Heart left ventricle (tissue), 16 donors: ENCODE measurements at regions of chr20 and their contacts with region 1.

Region 1: DNA sequence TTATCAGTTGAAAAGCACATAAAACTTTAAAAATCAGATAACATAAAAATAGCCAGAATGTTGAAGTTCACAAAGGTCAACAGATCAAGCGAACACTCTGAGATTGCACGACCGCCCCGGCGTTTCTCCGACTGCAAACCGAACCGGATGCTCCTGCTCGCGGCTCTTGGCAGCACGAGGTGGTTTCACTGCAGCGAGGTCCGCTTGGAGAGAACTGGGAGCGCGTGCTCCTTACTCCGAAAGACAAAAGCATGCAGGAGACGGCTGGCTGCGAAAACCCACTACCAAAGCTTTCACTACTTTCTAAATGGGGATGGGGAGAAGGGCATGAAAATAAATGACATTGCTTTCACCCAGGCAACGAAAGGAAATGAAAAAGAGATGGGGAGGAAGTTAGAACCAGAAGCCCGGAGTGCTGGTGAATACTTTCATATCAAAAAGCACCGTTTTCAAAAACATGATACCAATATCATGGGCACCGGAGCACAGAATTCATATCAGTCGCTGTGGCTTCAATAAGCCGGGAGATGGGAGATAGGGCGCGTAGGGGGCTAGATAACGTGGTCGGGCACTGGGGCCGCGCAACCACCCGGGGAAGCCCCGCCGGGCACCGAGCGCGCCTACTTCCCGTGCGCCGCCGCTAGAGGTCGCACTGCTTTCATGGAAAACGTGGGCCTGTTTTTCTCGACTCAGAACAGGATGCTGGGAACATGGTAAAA is 8.3 kb upstream of the ANKRD60 start:
- DNase-seq: peak; percentile 53 to 83 (median 71)
- ATAC-seq: peak; percentile 82 to 93 (median 92)
- H3K4me3 ChIP-seq: peak overlapping the region in 11 of 12 donors; percentile 16 to 59 (median 50)
- H3K27ac ChIP-seq: peak overlapping the region in 1 of 12 donors; percentile 18
- H3K4me1 ChIP-seq: peaks cover 0 to 11% (median 0%) of the 10 kb centered on the region in 12 donors
- H3K27me3 ChIP-seq: no peaks in the 10 kb centered on the region
- CTCF ChIP-seq: peak; percentile 94 to 98 (median 96)
- POLR2A ChIP-seq: no peak

Region 2: DNA sequence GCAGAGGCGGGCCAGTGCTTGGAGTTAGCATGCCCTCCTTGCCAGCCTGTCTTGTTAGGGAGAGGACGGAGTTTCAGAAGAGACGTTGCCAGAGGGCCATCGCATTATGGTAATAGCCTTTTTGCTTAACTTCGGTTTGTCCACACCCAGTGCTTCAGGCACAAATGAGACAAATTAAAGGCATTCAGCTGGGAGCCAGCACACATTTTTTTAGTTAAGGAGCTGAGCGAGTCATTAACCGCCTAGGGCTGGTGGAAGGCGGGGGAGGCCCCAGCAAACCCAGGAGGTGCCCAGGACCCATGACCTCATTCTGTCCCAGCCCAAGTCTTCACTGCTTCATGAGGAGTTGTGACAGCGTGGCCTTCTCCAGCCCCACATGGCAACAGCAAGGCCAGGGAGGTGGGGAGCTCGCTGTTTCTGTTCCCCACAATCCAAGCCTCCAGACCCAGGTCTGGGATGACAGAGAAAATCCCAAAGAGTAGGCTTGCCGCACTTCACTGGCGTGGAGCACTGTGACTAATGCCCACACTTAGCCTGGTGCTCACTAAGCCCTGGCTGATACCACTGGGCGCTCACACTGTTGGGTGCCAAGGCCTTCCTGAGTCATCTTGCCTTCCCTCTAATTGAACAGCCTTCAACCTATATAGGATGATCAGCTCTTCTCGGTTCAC is 245.4 kb before region 1 on chr20:
- intact Hi-C with region 1: no loop called
- DNase-seq: peak in 1 of 5 donors; percentile 46
- ATAC-seq: peak in 2 of 4 donors; percentile 52 to 61
- H3K4me3 ChIP-seq: no peak overlapping the region
- H3K27ac ChIP-seq: peak overlapping the region in 1 of 12 donors; percentile 26
- H3K4me1 ChIP-seq: peaks cover 0 to 26% (median 6%) of the 10 kb centered on the region in 12 donors
- H3K27me3 ChIP-seq: no peaks in the 10 kb centered on the region
- CTCF ChIP-seq: no peak
- POLR2A ChIP-seq: no peak

Region 3: GRCh38 chr20:58150772-58151171 is 86.0 kb before region 1 on chr20:
- intact Hi-C with region 1: no loop called
- DNase-seq: no peak
- ATAC-seq: no peak
- H3K4me3 ChIP-seq: no peak overlapping the region
- H3K27ac ChIP-seq: no peak overlapping the region
- H3K4me1 ChIP-seq: peaks cover 0 to 5% (median 0%) of the 10 kb centered on the region in 12 donors
- H3K27me3 ChIP-seq: peaks cover 4 to 61% (median 27%) of the 10 kb centered on the region in 9 donors
- CTCF ChIP-seq: no peak
- POLR2A ChIP-seq: no peak

Region 4: GRCh38 chr20:58179432-58180099 is 57.2 kb before region 1 on chr20:
- intact Hi-C with region 1: no loop called
- DNase-seq: peak; percentile 39 to 82 (median 60)
- ATAC-seq: peak; percentile 12 to 82 (median 70)
- H3K4me3 ChIP-seq: peak overlapping the region in 9 of 12 donors; percentile 13 to 49 (median 27)
- H3K27ac ChIP-seq: peak overlapping the region in 1 of 12 donors; percentile 7
- H3K4me1 ChIP-seq: peaks cover 0 to 22% (median 11%) of the 10 kb centered on the region in 12 donors
- H3K27me3 ChIP-seq: peaks cover 0 to 16% (median 2%) of the 10 kb centered on the region in 9 donors
- CTCF ChIP-seq: peak; percentile 97 to 100 (median 99)
- POLR2A ChIP-seq: no peak

Region 5: DNA sequence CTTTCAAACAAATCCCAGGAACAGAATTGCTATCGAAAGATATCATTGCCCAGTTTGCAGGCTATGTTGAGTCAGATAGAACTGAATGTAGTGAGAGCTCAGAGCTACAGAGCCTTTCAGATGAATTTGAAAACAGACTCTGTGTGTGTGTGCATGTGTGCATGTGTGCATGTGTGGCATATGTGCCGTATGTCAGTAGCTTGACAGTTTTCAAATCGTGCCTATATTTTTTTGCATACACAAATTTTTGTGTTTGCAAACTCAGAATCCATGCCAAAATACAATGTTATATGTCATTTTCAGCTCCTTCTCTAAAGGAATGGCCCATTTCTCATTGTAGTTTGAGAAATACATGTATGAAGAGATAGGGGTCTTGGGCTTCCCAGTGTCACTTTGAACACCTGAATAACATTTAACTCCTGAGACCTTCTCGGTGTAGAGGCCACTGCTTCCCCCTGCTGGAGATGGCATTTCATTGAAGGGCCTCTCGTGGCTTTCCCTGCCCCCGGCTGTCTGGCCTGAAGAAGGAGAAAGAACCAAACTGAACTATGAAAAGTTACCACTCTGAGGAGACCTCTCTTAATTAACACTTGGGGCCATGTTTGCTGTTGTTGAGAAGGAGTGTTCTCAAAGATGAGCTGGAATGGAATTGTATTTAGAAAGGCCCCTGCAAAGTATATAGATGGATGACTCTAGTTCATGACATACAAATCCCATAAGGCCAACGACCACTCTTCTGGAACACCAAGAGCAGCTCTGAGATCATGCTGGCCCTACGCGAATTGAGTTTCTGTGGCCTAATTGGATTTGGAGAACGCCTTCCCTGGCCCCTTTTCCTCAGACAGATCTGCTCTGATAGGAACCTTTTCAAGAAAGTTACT is 211.0 kb after region 1 on chr20:
- intact Hi-C with region 1: loop called (anchors 1 to 5 kb)
- DNase-seq: peak in 1 of 5 donors; percentile 42
- ATAC-seq: peak in 3 of 4 donors; percentile 53 to 78 (median 71)
- H3K4me3 ChIP-seq: no peak overlapping the region
- H3K27ac ChIP-seq: no peak overlapping the region
- H3K4me1 ChIP-seq: peaks cover 0 to 8% (median 0%) of the 10 kb centered on the region in 12 donors
- H3K27me3 ChIP-seq: no peaks in the 10 kb centered on the region
- CTCF ChIP-seq: peak; percentile 46 to 65 (median 54)
- POLR2A ChIP-seq: no peak

Region 6: GRCh38 chr20:58515233-58516184 is 278.7 kb after region 1 on chr20 and contains the start of gene APCDD1L:
- intact Hi-C with region 1: no loop called
- DNase-seq: no peak
- ATAC-seq: peak in 2 of 4 donors; percentile 53 to 76
- H3K4me3 ChIP-seq: peak within 1 kb of the TSS in 11 of 12 donors; percentile 2 to 54 (median 37)
- H3K27ac ChIP-seq: no peak within 1 kb of the TSS
- H3K4me1 ChIP-seq: peaks cover 0 to 10% (median 0%) of the 10 kb centered on the region in 12 donors
- H3K27me3 ChIP-seq: peaks cover 12 to 46% (median 33%) of the 10 kb centered on the region in 9 donors
- CTCF ChIP-seq: no peak
- POLR2A ChIP-seq: no peak
- total RNA-seq, gene APCDD1L: 0.24 to 1.1 (median 0.64) TPM in 8 of 9 donors, not detected in the other

Region 7: DNA sequence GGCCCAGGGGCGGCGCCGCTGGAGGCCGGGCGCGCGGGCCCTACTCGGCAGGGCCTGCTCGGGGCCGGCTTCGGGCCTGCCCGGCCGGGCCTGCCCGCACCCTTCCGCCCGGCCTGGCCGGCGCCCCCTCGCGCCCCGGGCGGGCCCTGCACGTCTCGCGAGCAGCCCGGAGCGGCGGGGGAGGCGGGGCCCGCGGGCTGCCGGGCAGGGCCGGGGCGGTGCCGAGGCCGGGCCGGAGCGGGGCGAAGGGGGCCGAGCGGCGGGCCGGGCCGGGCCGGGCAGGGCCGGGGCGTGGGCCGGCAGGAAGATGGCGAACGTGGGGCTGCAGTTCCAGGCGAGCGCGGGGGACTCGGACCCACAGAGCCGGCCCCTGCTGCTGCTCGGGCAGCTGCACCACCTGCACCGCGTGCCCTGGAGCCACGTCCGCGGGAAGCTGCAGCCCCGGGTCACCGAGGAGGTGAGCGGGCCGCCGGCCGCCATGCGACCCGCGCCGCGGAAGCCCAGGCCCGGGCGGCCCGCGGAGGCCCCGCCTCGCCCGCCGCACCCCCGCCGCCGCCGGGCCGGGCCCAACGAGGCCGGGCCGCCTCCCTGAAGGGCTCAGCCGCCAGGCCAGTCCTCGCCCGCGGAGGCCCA is 455.9 kb after region 1 on chr20 and contains the start of gene NPEPL1:
- intact Hi-C with region 1: loop called in 4 of 10 experiments (anchors 2 to 5 kb)
- DNase-seq: peak; percentile 77 to 88 (median 79)
- ATAC-seq: peak; percentile 33 to 92 (median 83)
- H3K4me3 ChIP-seq: peak within 1 kb of the TSS in 11 of 12 donors; percentile 34 to 74 (median 59)
- H3K27ac ChIP-seq: peak within 1 kb of the TSS; percentile 84 to 98 (median 92)
- H3K4me1 ChIP-seq: peaks cover 7 to 43% (median 22%) of the 10 kb centered on the region in 12 donors
- H3K27me3 ChIP-seq: no peaks in the 10 kb centered on the region
- CTCF ChIP-seq: peak in 3 of 12 donors; percentile 16 to 32 (median 17)
- POLR2A ChIP-seq: peak in 1 of 2 donors; percentile 31
- total RNA-seq, gene NPEPL1: 18.5 to 33.4 (median 30.1) TPM

Region 8: GRCh38 chr20:58839474-58839874 is 602.7 kb after region 1 on chr20:
- intact Hi-C with region 1: loop called in 3 of 10 experiments (anchors 5 kb)
- DNase-seq: no peak
- ATAC-seq: peak in 3 of 4 donors; percentile 59 to 79 (median 66)
- H3K4me3 ChIP-seq: peak overlapping the region in 7 of 12 donors; percentile 6 to 40 (median 17)
- H3K27ac ChIP-seq: no peak overlapping the region
- H3K4me1 ChIP-seq: peaks cover 0 to 16% (median 0%) of the 10 kb centered on the region in 12 donors
- H3K27me3 ChIP-seq: peaks cover 3 to 69% (median 28%) of the 10 kb centered on the region in 9 donors
- CTCF ChIP-seq: peak; percentile 13 to 58 (median 37)
- POLR2A ChIP-seq: no peak

Region 9: GRCh38 chr20:59455402-59456341 is 1218.9 kb after region 1 on chr20:
- intact Hi-C with region 1: loop called in 1 of 10 experiments (anchors 5 kb)
- DNase-seq: peak in 1 of 5 donors; percentile 54
- ATAC-seq: peak in 3 of 4 donors; percentile 42 to 85 (median 69)
- H3K4me3 ChIP-seq: no peak overlapping the region
- H3K27ac ChIP-seq: no peak overlapping the region
- H3K4me1 ChIP-seq: peaks cover 0 to 6% (median 0%) of the 10 kb centered on the region in 12 donors
- H3K27me3 ChIP-seq: peaks cover 0 to 25% (median 0%) of the 10 kb centered on the region in 9 donors
- CTCF ChIP-seq: peak; percentile 34 to 66 (median 50)
- POLR2A ChIP-seq: no peak